ENCODE measurements at regions of chr3 and their contacts with region 1.

Region 1: GRCh38 chr3:133374708-133375397 is 25.0 kb upstream of the BFSP2 start:
- DNase-seq: no peak

Region 2: DNA sequence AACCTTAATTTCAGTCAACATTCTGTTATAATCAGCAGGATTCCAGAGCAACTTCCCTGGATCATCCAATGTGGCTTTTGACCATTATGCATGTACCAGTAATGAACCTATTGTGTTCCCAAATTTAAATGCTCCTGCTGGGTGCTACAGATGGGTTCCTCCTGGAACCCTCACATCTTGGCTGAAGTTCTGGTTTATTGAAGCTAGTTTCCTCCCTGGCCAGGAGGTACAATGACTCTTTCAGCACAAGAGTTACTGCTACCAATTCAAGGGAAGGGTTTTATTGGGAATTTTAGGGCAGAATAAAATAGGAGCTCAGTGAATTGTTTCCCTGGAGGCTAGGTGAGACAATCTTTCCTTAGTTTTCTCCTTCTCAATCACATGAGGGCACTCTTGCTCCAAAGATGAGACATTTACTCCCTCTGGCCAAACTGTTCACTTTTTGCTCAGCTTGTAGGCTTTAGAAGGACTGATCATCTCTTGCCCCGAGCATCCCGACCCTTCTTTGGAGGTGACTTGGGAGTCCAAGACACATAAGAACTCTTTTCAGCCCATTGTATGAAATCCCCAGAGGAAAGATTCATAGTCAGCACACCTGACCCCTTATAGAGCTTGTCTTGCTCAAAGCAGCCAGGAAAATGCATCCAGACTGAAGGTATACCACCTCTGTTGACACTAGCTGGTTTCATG is 643.8 kb before region 1 on chr3:
- in situ Hi-C with region 1: loop called (anchors 25 kb)
- DNase-seq: peak; percentile 54

Measured in ACHN (cell line).